ENCODE measurements at regions of chr10 and their contacts with region 1.

Region 1: DNA sequence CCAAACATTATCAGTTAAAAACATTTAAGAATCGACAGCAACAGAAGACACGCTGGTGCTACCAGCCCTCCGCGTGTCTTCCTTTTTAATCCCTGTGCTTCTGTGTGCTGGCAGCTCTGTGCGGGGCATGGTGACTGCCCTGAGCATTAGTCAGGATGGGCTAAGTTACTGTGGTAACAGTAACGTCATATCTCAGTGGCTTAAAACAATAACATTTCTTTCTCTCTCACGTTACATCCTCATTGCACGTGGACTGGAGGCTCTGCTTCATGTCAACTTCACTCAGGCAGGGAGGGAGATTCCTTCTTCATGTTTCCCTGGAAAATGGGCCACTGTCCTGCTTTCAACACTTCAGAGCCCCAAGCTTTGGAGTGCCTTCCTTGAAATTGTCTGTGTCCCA is 378.5 kb downstream of the CCSER2 start:
- DNase-seq: no peak
- ATAC-seq: no peak
- H3K4me3 ChIP-seq: no peak overlapping the region
- H3K4me3 Mint-ChIP-seq: no peak overlapping the region
- H3K27ac ChIP-seq: no peak overlapping the region
- H3K27ac Mint-ChIP-seq: no peak overlapping the region
- H3K4me1 ChIP-seq: no peaks in the 10 kb centered on the region
- H3K4me1 Mint-ChIP-seq: no peaks in the 10 kb centered on the region
- H3K27me3 ChIP-seq: no peaks in the 10 kb centered on the region
- H3K27me3 Mint-ChIP-seq: no peaks in the 10 kb centered on the region
- CTCF ChIP-seq: no peak

Region 2: DNA sequence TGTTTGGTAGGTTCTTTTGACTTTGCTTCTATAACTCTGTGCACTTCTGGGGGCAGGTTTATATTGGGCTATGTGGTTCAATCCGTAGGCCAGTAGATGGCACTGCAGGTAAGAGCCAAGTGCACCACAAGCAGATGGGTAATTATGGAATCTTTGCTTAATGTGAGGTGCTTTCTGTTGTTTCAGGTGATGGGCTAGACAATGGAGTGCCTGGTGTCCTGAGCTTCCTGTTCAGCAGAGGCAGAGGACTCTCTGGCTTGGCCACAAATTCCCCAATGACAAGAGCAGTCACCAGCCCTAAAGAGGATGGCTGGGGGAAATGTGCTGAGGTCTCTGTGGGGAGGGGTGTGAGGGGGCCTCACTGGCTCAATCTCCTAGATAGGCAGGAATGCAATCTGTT is 76.5 kb after region 1 on chr10:
- CTCF ChIA-PET with region 1: no interaction called
- POLR2A ChIA-PET with region 1: no interaction called
- intact Hi-C with region 1: loop called in 1 of 2 experiments (anchors 2 kb)
- DNase-seq: peak in 1 of 14 experiments; percentile 11
- ATAC-seq: no peak
- H3K4me3 ChIP-seq: no peak overlapping the region
- H3K4me3 Mint-ChIP-seq: no peak overlapping the region
- H3K27ac ChIP-seq: no peak overlapping the region
- H3K27ac Mint-ChIP-seq: no peak overlapping the region
- H3K4me1 ChIP-seq: no peaks in the 10 kb centered on the region
- H3K4me1 Mint-ChIP-seq: no peaks in the 10 kb centered on the region
- H3K27me3 ChIP-seq: no peaks in the 10 kb centered on the region
- H3K27me3 Mint-ChIP-seq: peaks cover 12% of the 10 kb centered on the region
- CTCF ChIP-seq: no peak